ENCODE measurements at regions of chr5 and their contacts with region 1.

Region 1: DNA sequence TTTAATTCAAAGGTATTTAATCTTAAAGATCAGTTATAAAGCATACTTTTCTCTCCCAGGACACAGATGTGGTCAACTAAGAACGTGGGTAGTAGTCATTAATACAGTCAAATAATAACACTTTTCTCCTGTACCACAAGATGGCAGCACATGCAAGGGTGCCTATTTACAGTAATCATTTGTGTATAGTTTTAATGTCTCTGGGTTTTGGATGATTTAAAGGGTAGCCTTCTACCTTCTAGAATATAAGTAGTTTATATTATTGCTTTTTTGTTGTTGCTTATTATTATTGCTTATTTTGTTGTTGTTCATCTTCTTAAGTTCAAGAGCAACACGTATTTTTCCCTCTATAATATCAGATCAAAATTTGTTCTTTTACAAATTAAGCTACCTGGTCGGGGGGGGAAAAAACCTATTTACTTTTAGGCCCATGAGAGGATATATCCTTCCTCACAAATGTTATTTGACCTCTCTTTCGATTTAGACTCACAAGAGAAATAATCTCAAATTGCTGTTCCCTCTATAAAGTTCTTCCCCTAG is 59.6 kb upstream of the SLC27A6 start:
- DNase-seq: peak; percentile 63
- H3K4me3 Mint-ChIP-seq: no peak overlapping the region
- H3K27ac Mint-ChIP-seq: no peak overlapping the region
- H3K4me1 Mint-ChIP-seq: no peaks in the 10 kb centered on the region
- H3K27me3 Mint-ChIP-seq: no peaks in the 10 kb centered on the region
- CTCF ChIP-seq: peak; percentile 45

Region 2: GRCh38 chr5:128632264-128632663 is 273.4 kb before region 1 on chr5:
- CTCF ChIA-PET with region 1: no interaction called
- intact Hi-C with region 1: no loop called
- DNase-seq: no peak
- H3K4me3 Mint-ChIP-seq: no peak overlapping the region
- H3K27ac Mint-ChIP-seq: no peak overlapping the region
- H3K4me1 Mint-ChIP-seq: no peaks in the 10 kb centered on the region
- H3K27me3 Mint-ChIP-seq: no peaks in the 10 kb centered on the region
- CTCF ChIP-seq: no peak

Region 3: GRCh38 chr5:129053438-129053837 is 147.8 kb after region 1 on chr5:
- CTCF ChIA-PET with region 1: no interaction called
- intact Hi-C with region 1: loop called (anchors 1 kb)
- DNase-seq: no peak
- H3K4me3 Mint-ChIP-seq: no peak overlapping the region
- H3K27ac Mint-ChIP-seq: no peak overlapping the region
- H3K4me1 Mint-ChIP-seq: no peaks in the 10 kb centered on the region
- H3K27me3 Mint-ChIP-seq: no peaks in the 10 kb centered on the region
- CTCF ChIP-seq: no peak

Region 4: DNA sequence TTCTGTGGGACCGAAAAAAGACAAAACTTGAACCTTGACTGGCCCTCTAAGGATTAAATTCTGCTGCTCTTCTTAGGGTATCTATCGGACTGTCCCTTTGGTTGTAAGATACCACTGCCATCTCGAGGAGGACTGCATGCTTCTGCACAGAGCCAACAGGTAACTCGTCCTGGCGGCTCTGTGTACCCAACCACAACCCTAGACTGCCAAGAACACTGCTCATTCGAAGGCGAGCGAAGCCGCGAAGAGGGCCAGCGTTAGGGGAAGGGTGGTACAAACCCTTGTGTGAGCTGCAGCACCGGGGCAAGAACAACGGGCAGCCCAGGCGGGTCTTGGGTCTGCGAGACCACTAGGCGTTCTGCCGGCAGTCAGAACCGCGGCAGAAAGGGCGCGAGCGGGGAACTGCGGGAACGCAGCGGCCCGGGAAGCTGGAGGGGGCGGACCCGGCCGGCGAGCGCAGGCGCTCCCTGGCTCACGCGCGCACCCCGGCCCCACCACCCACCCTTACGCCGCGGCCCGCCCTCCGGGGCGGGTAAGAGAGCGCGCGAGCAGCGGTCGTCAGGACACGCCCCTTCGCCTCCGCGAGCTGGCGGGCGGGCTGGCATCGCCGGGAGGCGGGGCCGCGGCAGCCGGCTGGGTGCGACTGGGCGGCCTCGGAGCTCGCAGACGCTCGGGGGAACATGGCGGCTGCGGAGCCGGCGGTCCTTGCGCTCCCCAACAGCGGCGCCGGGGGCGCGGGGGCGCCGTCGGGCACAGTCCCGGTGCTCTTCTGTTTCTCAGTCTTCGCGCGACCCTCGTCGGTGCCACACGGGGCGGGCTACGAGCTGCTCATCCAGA is 188.7 kb after region 1 on chr5 and contains the start of gene ISOC1:
- CTCF ChIA-PET with region 1: interaction called, 14 read pairs
- intact Hi-C with region 1: loop called (anchors 1 kb)
- DNase-seq: peak; percentile 98
- H3K4me3 Mint-ChIP-seq: peak within 1 kb of the TSS; percentile 92
- H3K27ac Mint-ChIP-seq: peak within 1 kb of the TSS; percentile 68
- H3K4me1 Mint-ChIP-seq: peaks cover 13% of the 10 kb centered on the region
- H3K27me3 Mint-ChIP-seq: no peaks in the 10 kb centered on the region
- CTCF ChIP-seq: peak; percentile 11
- total RNA-seq, gene ISOC1: 30.8 and 32.6 TPM in 2 replicates

Region 5: DNA sequence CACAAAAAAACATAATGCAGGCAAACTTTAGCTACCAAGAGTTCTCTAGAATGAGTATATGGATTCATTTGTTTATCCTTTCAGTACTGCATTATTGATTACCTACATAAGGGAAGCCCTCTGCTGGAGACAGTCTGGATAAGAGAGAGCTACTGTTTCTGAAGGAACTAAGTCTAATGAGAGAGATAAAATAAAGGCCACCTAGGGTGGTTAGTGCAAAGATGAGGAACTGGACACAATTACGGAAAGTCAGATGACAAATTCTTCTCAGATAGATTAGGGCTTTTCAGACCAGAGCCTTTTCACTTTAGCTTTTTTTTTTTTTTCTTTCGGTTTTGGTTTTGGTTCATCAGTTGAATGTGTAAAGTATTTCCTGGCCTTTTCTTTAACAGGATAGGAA is 220.2 kb after region 1 on chr5:
- CTCF ChIA-PET with region 1: interaction called, 8 read pairs
- intact Hi-C with region 1: loop called (anchors 1 kb)
- DNase-seq: no peak
- H3K4me3 Mint-ChIP-seq: no peak overlapping the region
- H3K27ac Mint-ChIP-seq: no peak overlapping the region
- H3K4me1 Mint-ChIP-seq: no peaks in the 10 kb centered on the region
- H3K27me3 Mint-ChIP-seq: no peaks in the 10 kb centered on the region
- CTCF ChIP-seq: no peak

Region 6: GRCh38 chr5:129135633-129136032 is 230.0 kb after region 1 on chr5:
- CTCF ChIA-PET with region 1: no interaction called
- intact Hi-C with region 1: loop called (anchors 2 kb)
- DNase-seq: peak; percentile 15
- H3K4me3 Mint-ChIP-seq: no peak overlapping the region
- H3K27ac Mint-ChIP-seq: no peak overlapping the region
- H3K4me1 Mint-ChIP-seq: no peaks in the 10 kb centered on the region
- H3K27me3 Mint-ChIP-seq: no peaks in the 10 kb centered on the region
- CTCF ChIP-seq: no peak

Region 7: GRCh38 chr5:129271303-129271702 is 365.7 kb after region 1 on chr5:
- CTCF ChIA-PET with region 1: no interaction called
- intact Hi-C with region 1: loop called (anchors 2 kb)
- DNase-seq: peak; percentile 36
- H3K4me3 Mint-ChIP-seq: no peak overlapping the region
- H3K27ac Mint-ChIP-seq: no peak overlapping the region
- H3K4me1 Mint-ChIP-seq: no peaks in the 10 kb centered on the region
- H3K27me3 Mint-ChIP-seq: no peaks in the 10 kb centered on the region
- CTCF ChIP-seq: peak; percentile 30

Measured in Calu3 (cell line).